ENCODE measurements at regions of chr5 and their contacts with region 1.

Region 1: DNA sequence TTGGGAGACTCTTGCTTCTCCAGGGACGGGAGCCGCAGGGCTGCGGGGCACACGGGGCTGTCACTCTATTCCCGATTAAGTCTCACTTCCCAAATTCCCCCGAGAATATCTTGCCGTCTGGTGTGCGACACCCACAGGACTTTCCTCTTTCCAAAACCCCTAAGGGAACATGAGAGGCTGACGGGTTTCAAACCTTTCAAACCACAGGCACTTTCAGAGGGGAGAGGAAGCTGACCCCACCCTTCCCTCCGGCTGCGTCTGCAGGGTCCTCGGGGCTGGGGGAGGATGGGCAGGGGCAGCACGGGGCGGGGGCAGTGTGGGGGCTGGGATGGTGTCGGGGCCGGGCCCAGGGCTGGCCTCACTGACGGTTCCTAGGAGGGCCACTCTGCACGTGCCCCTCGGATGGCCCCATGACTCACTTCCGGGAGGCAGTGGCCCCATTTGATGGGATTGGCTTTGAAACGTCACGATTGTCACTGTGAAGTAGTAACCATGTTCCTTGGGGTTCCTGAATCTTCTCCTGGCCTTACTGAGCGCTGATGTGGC is 38.2 kb downstream of the SLC9A3 start:
- DNase-seq: no peak
- H3K4me3 ChIP-seq: no peak overlapping the region
- H3K27ac ChIP-seq: no peak overlapping the region
- H3K4me1 ChIP-seq: no peaks in the 10 kb centered on the region
- H3K27me3 ChIP-seq: no peaks in the 10 kb centered on the region
- CTCF ChIP-seq: no peak
- EP300 ChIP-seq: no peak
- POLR2A ChIP-seq: no peak

Region 2: DNA sequence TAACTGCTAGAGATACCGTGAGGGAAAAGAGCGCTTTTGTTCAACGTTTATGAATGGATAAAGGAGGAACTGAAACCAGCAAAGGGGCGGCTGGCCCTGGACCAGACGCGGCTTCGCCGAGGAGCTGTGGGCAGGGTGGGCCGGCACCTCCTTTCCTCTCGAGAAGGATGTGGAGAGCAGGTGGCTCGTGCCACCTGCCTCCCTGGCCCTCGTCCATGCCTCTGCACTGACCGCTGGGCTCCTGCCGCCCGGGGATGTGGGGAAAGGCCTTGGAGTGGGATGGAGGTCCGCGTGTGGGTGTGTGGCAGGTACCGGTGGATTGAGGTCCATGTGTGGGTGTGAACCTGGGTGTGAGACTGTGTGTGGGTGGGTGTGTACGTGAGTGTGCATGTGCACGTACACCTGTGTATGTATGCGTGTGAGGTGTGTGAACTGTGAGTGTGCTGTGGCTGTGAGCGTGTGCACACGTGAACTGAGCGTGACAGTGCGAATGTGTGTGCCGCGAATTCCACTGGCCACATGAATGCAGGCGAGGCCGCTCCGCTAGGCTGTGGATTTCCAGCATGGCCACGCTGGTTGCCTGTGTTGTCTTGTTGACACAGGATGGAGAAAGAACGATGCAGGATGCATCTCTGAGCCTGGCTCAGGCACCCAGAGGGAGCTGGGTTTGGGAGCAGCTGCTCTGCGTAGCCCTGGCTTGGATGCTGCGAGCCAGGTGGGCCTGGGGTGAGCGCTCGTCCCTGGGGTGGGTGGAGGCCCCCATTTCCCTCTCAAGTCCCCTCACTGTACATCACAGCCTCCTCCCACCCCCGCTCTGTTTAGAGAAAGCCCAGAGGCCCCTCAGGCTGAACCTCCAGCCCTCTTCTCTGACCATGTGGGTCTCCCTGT is 121.8 kb after region 1 on chr5:
- intact Hi-C with region 1: loop called in 1 of 4 experiments (anchors 10 kb)
- DNase-seq: peak in 1 of 5 donors; percentile 22
- H3K4me3 ChIP-seq: no peak overlapping the region
- H3K27ac ChIP-seq: no peak overlapping the region
- H3K4me1 ChIP-seq: peaks cover 3% of the 10 kb centered on the region
- H3K27me3 ChIP-seq: no peaks in the 10 kb centered on the region
- CTCF ChIP-seq: no peak
- EP300 ChIP-seq: no peak
- POLR2A ChIP-seq: no peak

Measured in ovary (tissue), 10 donors.